Dendritic cell treated with granulocyte-macrophage colony-stimulating factor and Interleukin-4, amounts not matched to agents 40 ng/mL and 50 ng/mL, for 4 days (primary cell): ENCODE measurements at regions of chr3 and their contacts with region 1.

Region 1: GRCh38 chr3:196518966-196519717 is 4.0 kb upstream of the SMCO1 start:
- H3K4me3 Mint-ChIP-seq: no peak overlapping the region
- H3K27ac Mint-ChIP-seq: no peak overlapping the region
- H3K4me1 Mint-ChIP-seq: no peaks in the 10 kb centered on the region
- H3K27me3 Mint-ChIP-seq: no peaks in the 10 kb centered on the region

Region 2: GRCh38 chr3:196251918-196252317 is 267.2 kb before region 1 on chr3:
- intact Hi-C with region 1: loop called (anchors 2 kb)
- H3K4me3 Mint-ChIP-seq: no peak overlapping the region
- H3K27ac Mint-ChIP-seq: no peak overlapping the region
- H3K4me1 Mint-ChIP-seq: no peaks in the 10 kb centered on the region
- H3K27me3 Mint-ChIP-seq: no peaks in the 10 kb centered on the region